IMR-90 (cell line): ENCODE measurements at regions of chr14 and their contacts with region 1.

Region 1: DNA sequence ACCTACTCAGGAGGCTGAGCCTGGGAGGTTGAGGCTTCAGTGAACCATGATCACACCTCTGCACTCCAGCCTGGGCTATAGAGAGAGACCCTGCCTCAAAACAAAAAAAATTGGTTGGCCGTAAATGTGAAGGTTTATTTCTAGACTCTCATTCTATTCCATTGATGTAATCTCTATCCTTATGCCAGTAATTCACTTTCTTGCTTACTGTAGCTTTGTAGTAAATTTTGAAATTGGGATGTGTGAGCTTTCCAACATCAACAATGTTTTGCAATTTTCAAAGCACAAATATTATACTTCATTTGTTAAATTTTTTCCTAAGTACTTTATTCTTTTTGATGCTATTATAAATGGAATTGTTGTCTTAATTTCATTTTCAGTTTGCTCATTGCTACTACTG is 24.6 kb downstream of the LIN52 start:
- DNase-seq: no peak
- ATAC-seq: no peak
- H3K4me3 ChIP-seq: no peak overlapping the region
- H3K27ac ChIP-seq: no peak overlapping the region
- H3K4me1 ChIP-seq: no peaks in the 10 kb centered on the region; the same call in 1 of the 2 replicates
- H3K27me3 ChIP-seq: no peaks in the 10 kb centered on the region
- CTCF ChIP-seq: no peak
- POLR2A ChIP-seq: no peak
- RAD21 ChIP-seq: no peak

Region 2: GRCh38 chr14:74249433-74250375 is 140.3 kb after region 1 on chr14:
- CTCF ChIA-PET with region 1: no interaction called
- POLR2A ChIA-PET with region 1: no interaction called
- dilution Hi-C with region 1: no loop called
- in situ Hi-C with region 1: loop called (anchors 5 kb)
- intact Hi-C with region 1: loop called (anchors 1 kb)
- DNase-seq: no peak
- ATAC-seq: no peak
- H3K4me3 ChIP-seq: no peak overlapping the region
- H3K27ac ChIP-seq: no peak overlapping the region
- H3K4me1 ChIP-seq: no peaks in the 10 kb centered on the region
- H3K27me3 ChIP-seq: peaks cover 56% of the 10 kb centered on the region
- CTCF ChIP-seq: no peak
- POLR2A ChIP-seq: no peak
- RAD21 ChIP-seq: no peak

Region 3: GRCh38 chr14:74257078-74257989 is 148.0 kb after region 1 on chr14:
- CTCF ChIA-PET with region 1: interaction called, 3 read pairs
- POLR2A ChIA-PET with region 1: no interaction called
- dilution Hi-C with region 1: no loop called
- in situ Hi-C with region 1: loop called (anchors 5 kb)
- intact Hi-C with region 1: loop called (anchors 1 kb)
- DNase-seq: peak; percentile 8
- ATAC-seq: peak; percentile 98
- H3K4me3 ChIP-seq: peak overlapping the region; percentile 50
- H3K27ac ChIP-seq: no peak overlapping the region
- H3K4me1 ChIP-seq: no peaks in the 10 kb centered on the region
- H3K27me3 ChIP-seq: peaks cover 56% of the 10 kb centered on the region
- CTCF ChIP-seq: peak; percentile 89
- POLR2A ChIP-seq: no peak
- RAD21 ChIP-seq: peak; percentile 47

Region 4: DNA sequence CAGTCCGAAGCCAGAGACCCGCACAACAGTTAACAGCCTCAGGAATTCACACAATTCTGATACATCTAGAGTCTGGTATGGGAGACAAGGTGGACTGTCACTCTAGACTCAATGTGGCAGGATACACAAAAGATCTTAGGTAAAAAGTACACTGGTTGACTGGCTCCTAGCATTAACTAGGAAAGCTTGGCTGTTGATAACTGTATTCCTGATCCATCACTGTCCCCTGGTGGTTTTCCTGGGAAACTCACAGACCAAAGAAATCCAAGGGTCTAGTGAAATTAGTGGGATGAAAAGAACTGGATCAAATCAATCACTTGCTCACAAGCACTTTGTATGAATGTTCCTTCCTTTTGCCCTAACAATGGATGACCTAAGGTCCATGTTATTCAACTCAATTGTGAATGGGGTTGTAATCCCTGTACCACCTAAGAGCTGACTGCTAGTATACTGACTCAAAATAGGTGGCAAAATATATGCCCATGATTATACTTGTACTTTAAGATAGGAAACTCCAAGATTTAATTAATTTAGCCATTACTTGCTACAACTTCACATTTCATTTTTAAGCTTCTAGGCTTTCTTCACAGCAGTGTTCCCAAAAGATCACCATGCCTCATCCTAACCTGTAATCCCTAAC is 369.7 kb after region 1 on chr14:
- CTCF ChIA-PET with region 1: no interaction called
- POLR2A ChIA-PET with region 1: no interaction called
- dilution Hi-C with region 1: no loop called
- in situ Hi-C with region 1: no loop called
- intact Hi-C with region 1: loop called (anchors 10 kb)
- DNase-seq: peak; percentile 42
- ATAC-seq: peak; percentile 53
- H3K4me3 ChIP-seq: no peak overlapping the region
- H3K27ac ChIP-seq: no peak overlapping the region
- H3K4me1 ChIP-seq: peaks cover 11% of the 10 kb centered on the region
- H3K27me3 ChIP-seq: no peaks in the 10 kb centered on the region
- CTCF ChIP-seq: peak; percentile 93
- POLR2A ChIP-seq: no peak
- RAD21 ChIP-seq: peak; percentile 95

Region 5: DNA sequence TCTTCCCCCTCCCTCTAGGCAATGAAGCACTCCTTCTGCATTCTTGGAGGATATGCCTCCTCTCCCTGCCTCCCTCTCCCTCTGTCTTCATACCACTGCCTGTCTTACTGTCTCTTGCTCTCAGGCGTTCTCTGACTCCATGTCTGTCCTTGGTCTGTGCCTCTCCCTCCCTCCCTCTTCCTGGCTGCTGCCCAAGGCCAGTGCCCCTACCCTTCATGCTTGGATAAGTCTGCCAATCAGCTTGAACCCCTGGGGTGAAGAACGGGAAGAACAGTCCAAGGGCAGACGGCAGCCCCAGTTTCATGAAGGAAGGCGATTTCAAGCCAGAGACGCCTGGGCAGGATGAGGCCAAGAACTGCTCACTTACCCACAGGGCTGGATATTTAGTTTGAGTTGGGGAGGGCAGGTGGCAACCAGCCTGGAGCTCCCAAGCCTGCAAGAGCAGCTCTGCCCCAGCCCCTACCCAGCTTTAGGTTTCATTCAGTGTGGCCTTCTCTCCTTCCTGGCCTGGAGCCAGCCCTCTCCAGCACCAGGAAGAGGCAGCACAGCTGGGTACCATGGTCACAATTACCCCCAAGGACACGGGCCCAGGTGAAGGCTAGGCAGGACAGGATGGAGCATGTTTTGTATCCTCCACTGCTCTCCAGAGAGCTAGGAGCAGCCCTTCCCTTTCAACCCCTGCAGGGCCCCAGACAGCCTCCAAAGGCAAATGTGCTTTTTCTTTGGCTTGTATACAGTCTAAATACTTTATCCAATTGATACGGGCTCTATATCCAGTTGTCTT is 538.5 kb after region 1 on chr14:
- CTCF ChIA-PET with region 1: no interaction called
- POLR2A ChIA-PET with region 1: no interaction called
- dilution Hi-C with region 1: no loop called
- in situ Hi-C with region 1: no loop called
- intact Hi-C with region 1: no loop called
- DNase-seq: no peak
- ATAC-seq: peak; percentile 23; the same call in 1 of the 2 replicates
- H3K4me3 ChIP-seq: no peak overlapping the region
- H3K27ac ChIP-seq: no peak overlapping the region
- H3K4me1 ChIP-seq: peaks cover 32% of the 10 kb centered on the region
- H3K27me3 ChIP-seq: no peaks in the 10 kb centered on the region
- CTCF ChIP-seq: no peak
- POLR2A ChIP-seq: no peak
- RAD21 ChIP-seq: no peak